Astrocyte of the cerebellum (primary cell): ENCODE measurements at regions of chr3 and their contacts with region 1.

Region 1: DNA sequence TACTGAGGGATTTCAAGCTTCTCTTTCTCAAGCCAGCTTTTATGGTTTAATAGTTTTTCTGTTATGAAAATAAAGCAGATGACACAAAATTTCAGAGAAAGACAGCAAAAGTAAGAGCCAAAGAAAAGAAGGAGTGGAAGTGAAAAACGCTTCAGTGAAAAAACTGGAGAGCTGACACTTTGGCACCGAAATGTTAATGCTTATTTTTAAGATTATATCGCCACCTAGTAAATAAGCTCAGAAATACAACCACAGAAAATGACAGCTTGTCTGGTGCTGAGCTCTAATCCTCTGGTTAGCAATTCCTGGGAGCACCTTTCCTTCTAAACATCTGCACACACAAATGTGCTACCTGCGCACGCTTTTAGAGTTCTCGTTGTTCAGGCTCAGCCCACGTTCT is 101.6 kb downstream of the ZPLD1 start:
- DNase-seq: peak; percentile 36
- H3K4me3 ChIP-seq: no peak overlapping the region
- CTCF ChIP-seq: peak; percentile 43

Region 2: GRCh38 chr3:101803173-101803782 is 733.2 kb before region 1 on chr3:
- in situ Hi-C with region 1: loop called (anchors 10 kb)
- DNase-seq: peak; percentile 67
- H3K4me3 ChIP-seq: no peak overlapping the region
- CTCF ChIP-seq: peak; percentile 84

Region 3: DNA sequence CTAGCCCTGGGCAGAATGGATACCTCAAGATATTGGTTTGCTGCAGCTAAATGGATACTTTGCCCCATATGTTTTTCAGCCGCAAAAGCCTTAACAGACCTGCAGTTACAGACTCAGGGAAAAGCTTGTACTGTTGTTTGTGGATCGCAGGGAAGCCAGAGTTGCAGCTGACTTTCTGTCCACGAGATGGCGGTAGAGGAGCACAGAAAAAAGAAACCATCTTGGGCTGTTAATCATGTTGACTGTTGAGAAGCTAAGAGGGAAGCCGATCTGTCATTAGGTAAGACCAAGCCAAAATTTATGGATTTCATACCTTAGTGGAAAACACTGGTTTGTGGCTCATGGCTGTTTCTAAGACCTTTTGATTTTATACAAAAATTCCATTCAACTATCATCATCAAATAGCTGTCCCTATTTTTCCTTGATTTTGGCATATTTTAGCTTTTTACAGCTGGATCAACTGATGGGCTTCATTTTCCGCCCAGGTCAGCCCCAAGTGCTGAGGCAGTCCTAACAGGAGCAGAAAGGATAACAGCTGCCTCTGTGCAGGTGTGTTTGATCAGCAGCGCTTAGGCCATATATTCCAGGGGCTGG is 307.3 kb before region 1 on chr3:
- in situ Hi-C with region 1: loop called (anchors 10 kb)
- DNase-seq: peak; percentile 62
- H3K4me3 ChIP-seq: no peak overlapping the region
- CTCF ChIP-seq: peak; percentile 95

Region 4: GRCh38 chr3:102444101-102444500 is 92.4 kb before region 1 on chr3:
- in situ Hi-C with region 1: no loop called
- DNase-seq: peak; percentile 49
- H3K4me3 ChIP-seq: no peak overlapping the region
- CTCF ChIP-seq: no peak